ENCODE measurements at regions of chr16 and their contacts with region 1.

Region 1: DNA sequence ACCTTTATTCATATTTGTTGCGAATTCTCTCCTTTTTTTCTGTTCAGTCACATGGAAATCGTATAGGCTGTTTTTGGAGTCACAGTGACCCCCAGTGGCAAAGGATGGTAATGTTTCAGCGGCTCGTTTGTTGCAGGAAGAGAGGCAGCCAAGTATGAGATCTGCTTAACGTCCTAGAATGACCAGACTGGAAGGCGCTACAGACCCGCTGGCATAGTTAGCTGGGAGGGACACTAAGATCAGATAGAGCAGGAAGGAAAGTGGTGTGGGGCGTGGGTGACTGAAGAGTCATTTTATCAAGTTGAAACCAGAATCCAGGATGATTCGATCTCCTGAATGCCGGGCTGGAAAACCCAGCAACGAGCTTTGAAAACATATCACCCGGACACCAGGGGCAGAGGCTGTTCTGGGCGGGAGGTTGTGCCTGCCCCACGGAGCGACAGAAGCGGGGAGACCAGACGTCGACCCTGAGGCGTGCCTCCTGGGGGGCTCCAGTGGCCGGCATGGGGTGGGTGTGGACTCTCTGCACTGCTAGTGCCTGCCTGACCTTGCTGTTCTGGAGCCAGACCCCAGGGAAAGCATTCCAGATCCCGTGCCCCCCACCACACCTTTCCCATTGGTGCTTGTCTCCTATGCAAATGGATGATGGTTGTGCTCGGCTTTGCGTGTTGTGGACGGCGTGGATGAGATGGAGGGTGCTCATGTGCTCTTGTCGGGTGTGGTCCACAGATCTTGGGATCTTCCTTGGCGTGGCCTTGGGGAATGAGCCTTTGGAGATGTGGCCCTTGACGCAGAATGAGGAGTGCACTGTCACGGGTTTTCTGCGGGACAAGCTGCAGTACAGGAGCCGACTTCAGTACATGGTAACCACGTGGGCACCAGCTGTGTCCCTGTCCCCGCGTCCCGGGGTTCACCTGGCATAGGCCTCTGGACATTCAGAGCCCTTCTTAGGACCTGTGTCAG is 7.7 kb downstream of the IL34 start:
- DNase-seq: peak; percentile 70 to 88
- H3K4me3 ChIP-seq: no peak overlapping the region
- H3K4me1 ChIP-seq: no peaks in the 10 kb centered on the region; the same call in 1 of the 2 replicates
- H3K27me3 ChIP-seq: no peaks in the 10 kb centered on the region

Region 2: GRCh38 chr16:70395345-70395901 is 258.7 kb before region 1 on chr16:
- in situ Hi-C with region 1: loop called (anchors 10 kb)
- DNase-seq: peak; percentile 34 to 85
- H3K4me3 ChIP-seq: no peak overlapping the region
- H3K4me1 ChIP-seq: no peaks in the 10 kb centered on the region
- H3K27me3 ChIP-seq: no peaks in the 10 kb centered on the region

Region 3: GRCh38 chr16:70737377-70738082 is 83.4 kb after region 1 on chr16:
- in situ Hi-C with region 1: no loop called
- DNase-seq: no peak
- H3K4me3 ChIP-seq: no peak overlapping the region
- H3K4me1 ChIP-seq: no peaks in the 10 kb centered on the region
- H3K27me3 ChIP-seq: no peaks in the 10 kb centered on the region

Measured in HAP-1 (cell line).